Right ventricle myocardium inferior (tissue), 1 donor: ENCODE measurements at regions of chr5 and their contacts with region 1.

Region 1: DNA sequence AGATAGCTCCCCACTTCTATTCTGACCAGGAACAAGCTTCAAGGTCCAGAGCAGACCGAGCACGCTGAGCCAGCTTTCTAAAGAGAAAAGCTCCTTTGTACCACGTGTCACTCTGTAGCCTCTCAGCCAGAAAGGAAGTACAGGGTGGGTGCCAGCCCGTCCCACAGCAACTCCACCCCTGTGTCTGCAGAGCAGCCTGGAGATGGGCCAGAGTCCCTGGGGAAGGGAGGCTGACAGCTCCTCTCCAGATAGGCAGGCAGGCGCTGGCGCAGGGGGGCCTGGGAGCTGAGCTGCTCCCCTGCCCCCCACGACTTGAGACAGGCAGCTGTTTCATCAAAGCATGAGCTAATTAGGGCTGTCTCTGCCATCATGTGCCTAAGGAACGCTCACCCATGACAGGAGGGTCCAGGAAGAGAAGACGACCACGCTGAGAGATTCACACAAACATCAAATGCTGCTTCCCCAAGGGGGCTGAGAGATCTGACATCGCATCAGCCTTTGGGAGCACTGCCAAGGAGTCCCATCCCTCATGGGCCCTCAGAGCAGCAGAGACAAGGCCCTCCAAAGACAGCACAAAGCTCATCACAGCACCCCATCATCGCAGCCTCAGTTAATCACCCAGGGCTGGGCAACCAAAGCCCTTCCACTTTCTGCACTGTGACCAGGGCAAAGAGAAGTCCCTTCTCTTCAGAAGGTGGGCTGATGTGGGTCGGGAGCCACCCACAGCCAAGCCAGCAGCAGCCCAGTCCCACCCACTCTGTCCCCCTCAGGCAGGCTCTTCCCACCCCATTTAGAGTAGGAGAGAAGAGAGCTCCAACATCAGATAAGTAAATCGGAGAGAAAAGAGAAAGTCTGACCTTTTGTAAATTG is 78.5 kb upstream of the LRRTM2 start:
- DNase-seq: peak; percentile 92
- ATAC-seq: peak; percentile 94

Region 2: DNA sequence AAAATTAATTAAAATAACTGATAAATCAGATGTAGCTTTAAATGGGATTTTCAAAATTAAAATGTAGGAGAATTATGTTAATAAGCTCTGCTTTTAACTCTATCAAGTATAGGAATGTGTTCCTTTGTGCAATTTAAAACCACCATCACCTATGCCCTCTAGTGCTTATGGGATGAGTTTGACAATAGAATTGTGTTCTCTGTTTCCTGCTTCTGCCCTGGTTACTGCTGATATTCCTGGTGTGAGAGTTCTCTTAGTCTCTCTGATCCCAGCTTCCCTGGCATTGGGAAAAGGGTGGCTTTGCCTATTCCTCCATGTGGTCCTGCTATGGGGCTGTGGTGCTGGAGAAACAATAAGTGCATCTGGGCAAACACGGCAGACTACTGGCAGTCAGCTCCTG is 86.6 kb before region 1 on chr5:
- intact Hi-C with region 1: no loop called
- DNase-seq: no peak
- ATAC-seq: no peak

Region 3: DNA sequence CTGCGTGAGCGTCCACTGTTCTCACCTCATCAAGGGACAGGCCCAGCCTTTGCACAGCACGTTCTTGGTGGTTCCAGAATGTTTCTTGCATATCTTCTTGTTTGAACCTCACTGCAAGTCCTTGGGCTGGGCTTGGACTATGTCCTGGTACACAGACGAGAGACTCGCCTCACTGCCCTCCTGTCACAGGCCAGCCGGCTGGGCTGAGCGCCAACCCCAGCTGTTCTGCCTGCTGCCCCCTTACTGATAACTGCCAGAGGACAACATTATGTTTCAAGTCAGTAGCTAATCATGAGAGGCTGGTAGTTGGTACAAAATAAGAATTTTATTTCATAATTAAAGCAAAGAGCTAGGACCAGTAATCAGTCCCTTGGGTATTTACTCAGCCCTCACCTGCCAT is 25.6 kb before region 1 on chr5:
- intact Hi-C with region 1: loop called (anchors 2 kb)
- DNase-seq: peak; percentile 86
- ATAC-seq: peak; percentile 83

Region 4: DNA sequence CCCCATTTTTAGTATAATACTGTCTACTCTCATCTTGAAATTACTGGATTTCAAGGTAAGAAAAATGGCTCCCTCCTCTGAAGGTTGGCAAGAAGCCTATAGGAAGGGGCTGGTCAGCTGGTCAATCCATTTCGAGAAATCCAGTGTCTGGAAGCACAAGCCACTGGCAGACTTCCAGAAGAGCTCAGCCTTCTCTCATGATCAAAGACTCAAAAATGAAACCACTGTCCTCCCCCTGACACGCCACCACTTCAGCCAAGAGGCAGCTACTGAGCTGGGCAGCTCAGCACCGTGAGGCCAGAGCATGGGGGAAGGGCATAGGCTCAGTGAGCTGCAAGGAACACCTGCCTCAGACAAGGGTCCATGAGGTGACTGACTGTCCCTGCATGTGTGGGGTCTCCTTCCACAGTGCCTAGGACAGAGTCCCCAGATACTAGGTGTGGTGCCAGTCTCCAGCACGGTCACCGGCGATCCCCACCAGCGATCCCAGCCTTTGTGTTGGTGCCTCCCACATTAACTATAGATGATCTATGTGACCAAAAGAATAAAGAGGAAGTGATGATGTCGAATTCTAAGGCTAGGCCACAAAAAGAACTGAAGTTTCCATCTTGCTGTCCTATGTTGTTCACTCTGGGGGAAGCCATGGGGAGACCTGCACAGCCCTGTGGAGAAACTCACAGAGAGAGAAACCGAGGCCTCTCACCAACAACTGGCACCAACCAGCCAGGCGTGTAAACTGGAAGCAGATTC is 21.7 kb after region 1 on chr5:
- intact Hi-C with region 1: loop called (anchors 1 kb)
- DNase-seq: no peak
- ATAC-seq: peak; percentile 27